Activated T-helper 2 cell treated with anti-CD3 and anti-CD28 coated beads, Interferon-gamma antibody, Interleukin-2, Interleukin-4, amounts not matched to agents 10 μg/mL and 5 μg/mL and 100 μg/mL, durations not matched to agents 14 hours and 24 hours and 36 hours (primary cell): ENCODE measurements at regions of chrX and their contacts with region 1.

Region 1: DNA sequence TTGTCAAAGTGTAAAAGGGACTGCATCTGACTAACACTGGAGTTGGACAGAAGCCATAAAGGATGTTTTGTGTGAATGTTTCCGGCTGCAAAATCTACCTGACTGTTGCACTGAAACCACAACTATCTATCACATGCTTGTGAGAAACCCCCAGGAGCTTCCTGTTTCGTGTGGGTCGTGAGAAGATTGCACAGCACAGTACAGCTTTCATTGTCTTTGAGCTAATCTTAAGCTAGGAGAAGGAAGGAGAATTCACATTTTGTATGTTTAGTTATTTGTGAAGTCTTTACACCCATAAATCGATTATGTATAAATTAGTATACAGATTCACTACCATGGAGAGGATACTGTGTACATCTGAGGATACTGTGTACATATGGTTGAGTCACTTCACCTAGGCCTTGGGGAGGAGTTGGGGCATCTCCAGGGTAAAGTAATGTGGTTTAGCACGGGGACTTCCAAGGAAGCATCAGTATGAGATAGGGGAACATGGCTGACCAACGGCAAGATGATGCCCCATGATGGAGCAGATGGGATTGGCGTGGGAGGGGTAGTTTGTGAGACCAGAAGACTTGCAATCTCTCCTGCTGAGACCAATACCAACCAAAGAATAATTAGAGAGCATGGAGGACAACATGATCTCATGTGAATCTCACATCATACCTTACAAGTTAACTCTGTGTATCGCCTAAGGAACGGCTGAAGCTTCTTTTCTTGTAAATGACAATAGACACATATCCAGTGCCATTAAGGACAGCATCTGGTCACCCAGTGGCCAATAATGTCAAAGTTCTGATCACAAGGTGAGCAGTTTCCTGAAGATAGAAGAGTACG is 43.1 kb upstream of the FAM9C start:
- DNase-seq: peak; percentile 61
- H3K4me3 Mint-ChIP-seq: peak overlapping the region; percentile 82
- H3K27ac Mint-ChIP-seq: peak overlapping the region; percentile 100
- H3K4me1 Mint-ChIP-seq: peaks cover 69% of the 10 kb centered on the region
- H3K27me3 Mint-ChIP-seq: no peaks in the 10 kb centered on the region

Region 2: DNA sequence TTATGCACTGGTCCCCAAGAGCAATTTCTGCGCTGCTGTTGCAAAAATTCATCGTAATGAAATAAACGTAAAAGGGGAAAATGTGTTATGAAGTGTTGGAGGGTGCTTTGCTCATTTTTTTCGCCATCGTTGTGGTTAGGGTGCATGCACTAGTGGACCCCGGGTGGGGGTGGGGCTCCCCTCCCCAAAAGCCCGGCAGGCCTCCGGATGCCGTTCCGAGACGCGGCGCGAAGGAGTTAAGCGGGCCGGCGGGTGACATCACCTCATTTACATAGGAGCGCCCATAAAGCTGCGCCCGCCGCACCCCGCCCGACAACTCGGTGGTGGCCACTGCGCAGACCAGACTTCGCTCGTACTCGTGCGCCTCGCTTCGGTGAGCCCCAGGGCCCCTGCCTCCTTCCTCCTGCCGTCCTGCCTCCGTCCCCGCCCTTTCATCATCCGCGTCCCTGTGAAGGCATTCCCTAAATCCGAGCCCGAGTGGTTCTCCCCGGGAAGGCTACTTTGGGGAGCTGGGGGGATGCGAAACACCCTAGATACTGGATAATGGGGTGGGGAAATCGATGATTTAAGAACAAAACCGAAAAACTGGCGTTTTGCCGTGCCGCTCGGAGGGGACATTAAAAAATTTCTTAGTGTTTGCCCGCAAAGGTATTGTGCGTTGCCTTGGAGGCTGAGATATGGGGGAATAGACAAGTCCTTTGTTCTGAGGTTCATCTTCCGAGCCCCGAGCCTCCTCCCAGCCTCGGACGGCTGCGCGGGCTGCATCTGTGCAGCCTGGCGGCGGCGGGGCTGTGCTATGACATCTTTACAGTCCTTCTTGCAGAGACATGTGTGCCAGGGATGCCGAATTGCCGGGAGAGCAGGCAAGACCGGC is 112.5 kb before region 1 on chrX and contains the start of gene TMSB4X:
- intact Hi-C with region 1: loop called (anchors 1 kb)
- DNase-seq: peak; percentile 84
- H3K4me3 Mint-ChIP-seq: peak within 1 kb of the TSS; percentile 96
- H3K27ac Mint-ChIP-seq: peak within 1 kb of the TSS; percentile 95
- H3K4me1 Mint-ChIP-seq: peaks cover 35% of the 10 kb centered on the region
- H3K27me3 Mint-ChIP-seq: no peaks in the 10 kb centered on the region
- total RNA-seq, gene TMSB4X: 7,759 and 7,983 TPM in 2 replicates

Region 3: DNA sequence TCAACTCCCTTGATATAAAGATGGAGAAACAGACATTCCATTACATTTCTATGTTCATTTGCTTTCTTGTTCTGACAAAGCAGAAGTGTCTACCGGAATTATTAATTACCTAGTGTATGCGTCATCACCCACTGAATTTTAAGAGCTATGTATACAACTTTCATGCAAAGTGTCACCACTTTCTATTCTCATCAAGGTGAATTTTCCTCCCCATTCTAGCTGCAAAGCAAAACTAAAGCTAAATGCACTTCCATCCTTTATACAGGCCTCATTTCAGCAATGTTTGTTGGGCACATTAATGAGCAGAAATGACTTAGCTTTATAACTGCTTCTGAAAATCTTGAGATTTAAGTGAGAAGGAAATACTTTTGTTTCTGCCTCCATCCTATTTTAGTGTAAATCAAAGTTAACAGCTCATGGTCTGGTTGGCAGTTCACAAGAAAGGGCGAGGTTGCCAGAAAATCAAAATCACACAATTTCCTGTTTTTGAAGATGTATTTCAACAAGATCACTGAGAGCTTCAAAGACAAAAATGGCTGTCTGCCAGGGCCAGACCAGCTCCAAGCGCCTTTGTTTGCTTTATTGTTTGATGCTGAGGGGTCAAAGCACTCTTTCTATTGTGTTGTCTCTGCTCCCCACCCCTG is 35.9 kb before region 1 on chrX:
- intact Hi-C with region 1: loop called (anchors 1 kb)
- DNase-seq: no peak
- H3K4me3 Mint-ChIP-seq: no peak overlapping the region
- H3K27ac Mint-ChIP-seq: peak overlapping the region; percentile 85
- H3K4me1 Mint-ChIP-seq: peaks cover 34% of the 10 kb centered on the region
- H3K27me3 Mint-ChIP-seq: no peaks in the 10 kb centered on the region

Region 4: GRCh38 chrX:13151828-13152510 is 64.4 kb after region 1 on chrX:
- intact Hi-C with region 1: loop called (anchors 5 kb)
- DNase-seq: peak; percentile 48
- H3K4me3 Mint-ChIP-seq: no peak overlapping the region
- H3K27ac Mint-ChIP-seq: peak overlapping the region; percentile 58
- H3K4me1 Mint-ChIP-seq: peaks cover 22% of the 10 kb centered on the region
- H3K27me3 Mint-ChIP-seq: no peaks in the 10 kb centered on the region

Region 5: GRCh38 chrX:13398073-13398823 is 310.7 kb after region 1 on chrX:
- intact Hi-C with region 1: loop called (anchors 5 kb)
- DNase-seq: no peak
- H3K4me3 Mint-ChIP-seq: no peak overlapping the region
- H3K27ac Mint-ChIP-seq: peak overlapping the region; percentile 43
- H3K4me1 Mint-ChIP-seq: peaks cover 12% of the 10 kb centered on the region
- H3K27me3 Mint-ChIP-seq: no peaks in the 10 kb centered on the region